ENCODE measurements at regions of chr4 and their contacts with region 1.

Region 1: GRCh38 chr4:81405894-81406401 is 65.8 kb downstream of the RASGEF1B start:
- DNase-seq: peak; percentile 77

Region 2: DNA sequence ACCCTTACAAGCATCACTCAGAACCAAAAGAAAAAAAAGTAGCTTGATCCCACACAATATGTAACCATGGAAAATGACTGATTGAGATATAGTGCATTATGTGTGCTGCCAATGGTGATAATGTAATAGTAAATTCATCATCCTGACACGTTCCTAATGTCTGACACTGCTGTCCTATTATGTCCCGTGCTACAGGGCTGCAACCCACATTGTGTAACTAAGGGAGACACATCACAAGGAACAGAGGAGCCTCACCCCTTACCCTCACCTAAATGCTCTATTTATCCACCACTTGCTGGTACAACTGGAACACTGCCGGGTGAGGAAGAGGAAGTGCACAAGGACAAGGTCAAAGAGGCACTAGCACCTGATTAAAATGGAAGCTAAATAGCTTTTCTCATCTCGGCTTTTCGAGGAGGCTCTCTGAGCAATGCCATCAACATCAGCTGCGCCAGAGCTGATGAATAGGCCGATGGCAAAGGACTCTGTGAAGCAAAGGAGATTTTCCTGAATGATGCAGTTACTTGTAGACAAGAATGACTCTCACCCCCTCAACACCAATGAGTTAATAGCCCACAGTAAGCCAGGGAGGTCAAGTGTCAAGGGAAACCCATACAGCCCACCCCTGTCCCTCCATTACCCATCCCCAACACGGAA is 786.2 kb after region 1 on chr4:
- in situ Hi-C with region 1: loop called (anchors 25 kb)
- DNase-seq: no peak

Measured in KBM-7 (cell line).